ENCODE measurements at regions of chr1 and their contacts with region 1.

Region 1: DNA sequence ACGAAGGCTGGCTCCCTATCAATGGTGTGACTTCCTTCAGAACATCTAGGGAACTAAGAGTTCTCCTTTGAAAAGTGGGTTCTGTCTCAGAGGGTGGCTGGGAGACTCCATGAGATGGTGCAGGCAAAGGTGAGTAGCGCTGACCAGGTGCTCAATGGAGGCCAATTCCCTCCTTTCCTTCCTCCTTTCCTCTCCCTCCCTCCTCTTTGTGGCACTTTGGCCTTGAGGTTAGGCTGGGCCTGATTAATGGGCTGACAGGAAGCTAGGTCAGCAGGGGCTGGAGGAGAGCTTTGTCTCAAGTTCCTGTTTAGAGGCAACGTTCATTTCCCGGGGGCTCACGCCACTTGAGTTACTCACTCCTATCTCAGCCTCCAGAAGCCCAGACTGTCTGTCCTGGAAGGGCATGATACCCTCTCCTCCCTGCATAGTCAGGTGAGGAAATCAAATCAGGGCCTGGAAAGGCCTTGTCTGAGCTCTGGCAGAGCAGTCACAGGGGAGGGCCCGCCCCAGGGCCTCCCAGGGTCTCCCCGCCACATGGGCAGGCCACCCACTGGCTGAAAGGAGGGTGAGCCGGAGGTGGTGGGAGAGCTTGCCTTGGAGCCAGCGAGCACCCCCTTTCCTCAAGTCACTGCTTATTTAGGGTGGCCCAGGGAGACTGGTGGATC is 58.4 kb upstream of the SSBP3 start:
- DNase-seq: peak; percentile 39 to 62
- ATAC-seq: no peak
- H3K4me3 ChIP-seq: no peak overlapping the region
- H3K27ac ChIP-seq: no peak overlapping the region
- H3K4me1 ChIP-seq: no peaks in the 10 kb centered on the region
- H3K27me3 ChIP-seq: no peaks in the 10 kb centered on the region

Region 2: DNA sequence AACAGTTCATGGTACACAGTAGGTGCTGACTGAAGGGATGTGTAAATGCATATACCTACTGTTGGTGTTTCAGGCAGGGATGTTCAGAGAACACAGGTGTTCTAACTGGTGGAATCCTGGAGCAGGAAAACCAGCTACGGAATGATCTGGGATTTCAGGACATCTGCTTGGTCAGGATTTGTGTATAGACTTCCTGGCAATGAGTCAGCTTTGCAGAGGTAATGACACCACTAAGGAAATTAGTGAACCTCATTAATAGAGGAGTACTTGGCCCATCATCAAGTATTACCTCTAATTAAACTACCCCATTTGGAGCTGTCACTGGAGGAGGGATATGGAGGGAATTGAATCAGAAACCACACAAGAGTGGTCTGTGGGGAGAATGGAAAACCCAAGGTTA is 257.3 kb before region 1 on chr1:
- intact Hi-C with region 1: no loop called
- DNase-seq: no peak
- ATAC-seq: no peak
- H3K4me3 ChIP-seq: no peak overlapping the region
- H3K27ac ChIP-seq: no peak overlapping the region
- H3K4me1 ChIP-seq: no peaks in the 10 kb centered on the region
- H3K27me3 ChIP-seq: no peaks in the 10 kb centered on the region

Region 3: DNA sequence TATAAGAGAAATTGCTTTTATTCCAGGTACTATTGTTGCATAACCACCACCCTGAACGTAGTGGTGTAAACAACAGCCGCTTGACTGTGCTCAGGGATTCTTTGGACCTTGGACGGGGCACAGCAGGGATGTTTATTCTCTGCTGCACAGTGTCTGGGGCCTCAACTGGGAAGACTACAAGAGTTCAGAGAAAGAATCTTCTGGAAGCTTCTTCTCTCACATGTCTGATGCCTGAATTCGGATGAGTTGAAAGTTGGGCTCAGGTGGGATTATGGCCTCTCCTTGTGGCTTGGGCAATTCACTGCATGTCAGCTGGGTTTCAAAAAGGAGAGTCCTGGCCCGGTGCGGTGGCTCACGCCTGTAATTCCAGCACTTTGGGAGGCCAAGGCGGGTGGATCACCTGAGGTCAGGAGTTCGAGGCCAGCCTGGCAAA is 39.4 kb before region 1 on chr1:
- intact Hi-C with region 1: loop called in 1 of 2 experiments (anchors 5 kb)
- DNase-seq: peak in 1 of 2 donors; percentile 27
- ATAC-seq: no peak
- H3K4me3 ChIP-seq: no peak overlapping the region
- H3K27ac ChIP-seq: no peak overlapping the region
- H3K4me1 ChIP-seq: no peaks in the 10 kb centered on the region
- H3K27me3 ChIP-seq: no peaks in the 10 kb centered on the region

Region 4: GRCh38 chr1:54519709-54520108 is 55.1 kb after region 1 on chr1:
- intact Hi-C with region 1: no loop called
- DNase-seq: no peak
- ATAC-seq: no peak
- H3K4me3 ChIP-seq: no peak overlapping the region
- H3K27ac ChIP-seq: no peak overlapping the region
- H3K4me1 ChIP-seq: no peaks in the 10 kb centered on the region
- H3K27me3 ChIP-seq: no peaks in the 10 kb centered on the region